K562 (cell line): ENCODE measurements at regions of chr19 and their contacts with region 1.

Region 1: GRCh38 chr19:46392243-46392801 is 21.0 kb downstream of the CCDC8 start:
- DNase-seq: no peak
- ATAC-seq: no peak; the same call in 2 of the 3 replicates
- H3K4me3 ChIP-seq: no peak overlapping the region
- H3K27ac ChIP-seq: no peak overlapping the region
- H3K4me1 ChIP-seq: peaks cover 0 to 23% of the 10 kb centered on the region in 2 experiments; a peak in 2 of 5 replicates
- H3K27me3 ChIP-seq: peaks cover 0 to 2% of the 10 kb centered on the region in 2 experiments; a peak in 2 of 5 replicates
- CTCF ChIP-seq: no peak
- EP300 ChIP-seq: no peak
- POLR2A ChIP-seq: no peak
- RAD21 ChIP-seq: no peak

Region 2: DNA sequence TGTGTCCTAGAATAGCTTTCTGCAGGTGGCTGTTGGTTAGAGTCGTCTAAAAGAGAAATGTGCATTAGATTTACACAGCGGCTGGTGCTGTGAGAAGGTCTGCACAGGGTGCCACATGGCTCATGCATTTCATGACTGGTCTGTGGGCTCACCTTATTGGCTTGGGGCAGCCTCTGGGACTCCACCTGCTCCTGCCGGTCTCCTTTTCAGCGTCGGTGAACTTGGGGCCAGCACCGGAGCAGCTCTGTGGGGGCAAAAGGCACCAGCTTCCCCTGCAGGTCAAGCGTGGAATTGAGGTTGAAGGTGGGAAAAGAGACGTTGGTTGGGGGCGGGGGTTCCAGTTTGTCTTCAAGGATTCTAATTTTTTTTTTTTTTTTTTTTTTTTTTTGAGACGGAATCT is 39.5 kb after region 1 on chr19:
- CTCF ChIA-PET with region 1: interaction called, 11 read pairs
- POLR2A ChIA-PET with region 1: no interaction called
- in situ Hi-C with region 1: no loop called
- intact Hi-C with region 1: no loop called
- DNase-seq: peak; percentile 36 to 60 (median 48)
- ATAC-seq: peak; percentile 90
- H3K4me3 ChIP-seq: no peak overlapping the region
- H3K27ac ChIP-seq: no peak overlapping the region
- H3K4me1 ChIP-seq: peaks cover 0 to 11% of the 10 kb centered on the region in 2 experiments; a peak in 2 of 5 replicates
- H3K27me3 ChIP-seq: peaks cover 35 to 37% of the 10 kb centered on the region in 2 experiments
- CTCF ChIP-seq: peak; percentile 66 to 85 (median 79)
- EP300 ChIP-seq: no peak
- POLR2A ChIP-seq: no peak
- RAD21 ChIP-seq: peak; percentile 21 to 74; a peak in 2 of 4 replicates

Region 3: GRCh38 chr19:46487802-46488445 is 95.6 kb after region 1 on chr19:
- CTCF ChIA-PET with region 1: interaction called, 325 read pairs
- POLR2A ChIA-PET with region 1: interaction called, 3 read pairs
- in situ Hi-C with region 1: loop called (anchors 5 kb)
- intact Hi-C with region 1: loop called (anchors 1 kb)
- DNase-seq: peak; percentile 74 to 80 (median 77)
- ATAC-seq: peak; percentile 89
- H3K4me3 ChIP-seq: no peak overlapping the region
- H3K27ac ChIP-seq: no peak overlapping the region
- H3K4me1 ChIP-seq: peaks cover 0 to 22% of the 10 kb centered on the region in 2 experiments; a peak in 4 of 5 replicates
- H3K27me3 ChIP-seq: peaks cover 51 to 80% of the 10 kb centered on the region in 2 experiments
- CTCF ChIP-seq: peak; percentile 94 to 97 (median 95)
- EP300 ChIP-seq: no peak
- POLR2A ChIP-seq: no peak
- RAD21 ChIP-seq: peak; percentile 96 to 99

Region 4: DNA sequence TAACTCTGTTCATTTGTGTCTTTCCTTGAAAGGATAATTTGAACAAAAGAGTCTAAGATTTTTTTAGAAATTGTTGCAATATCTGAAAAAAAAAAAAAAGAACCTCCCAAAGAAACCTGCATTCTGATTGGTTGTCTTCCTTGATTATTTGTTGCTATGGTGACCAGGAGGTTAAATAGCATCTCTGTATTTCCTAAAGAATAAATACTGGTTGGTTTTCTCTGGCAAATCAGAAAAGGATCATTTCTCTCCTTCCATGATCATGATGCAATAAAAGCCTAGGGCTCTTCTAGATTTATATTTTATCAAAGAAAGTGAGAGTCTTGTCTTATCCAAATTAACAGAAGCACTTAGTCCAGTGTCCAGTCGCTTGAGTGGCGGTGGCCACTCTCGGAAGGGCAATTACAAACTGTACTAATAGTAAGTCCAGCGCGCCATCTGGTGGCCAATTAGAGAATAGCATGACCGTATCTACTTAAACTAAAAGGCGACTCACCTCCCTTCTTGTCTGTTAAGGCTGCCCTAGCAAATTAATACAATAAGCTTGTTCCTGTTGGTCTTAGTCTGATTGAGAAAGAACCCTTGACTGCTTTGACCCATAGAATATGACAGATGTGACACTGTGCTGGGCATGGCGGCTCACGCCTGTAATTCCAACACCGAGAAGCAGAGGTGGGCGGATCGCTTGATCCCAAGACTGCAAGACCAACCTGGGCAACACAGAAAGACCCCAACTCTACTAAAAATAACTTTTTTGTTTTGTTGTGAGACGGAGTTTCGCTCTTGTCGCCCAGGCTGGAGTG is 150.3 kb after region 1 on chr19:
- CTCF ChIA-PET with region 1: interaction called, 16 read pairs
- POLR2A ChIA-PET with region 1: no interaction called
- in situ Hi-C with region 1: no loop called
- intact Hi-C with region 1: no loop called
- DNase-seq: peak; percentile 74 to 91 (median 75)
- ATAC-seq: peak; percentile 92
- H3K4me3 ChIP-seq: no peak overlapping the region
- H3K27ac ChIP-seq: no peak overlapping the region
- H3K4me1 ChIP-seq: no peaks in the 10 kb centered on the region; a peak in 2 of 5 replicates
- H3K27me3 ChIP-seq: peaks cover 7 to 8% of the 10 kb centered on the region in 2 experiments; a peak in 4 of 5 replicates
- CTCF ChIP-seq: peak; percentile 84 to 96 (median 86)
- EP300 ChIP-seq: no peak
- POLR2A ChIP-seq: no peak
- RAD21 ChIP-seq: peak; percentile 68 to 85